CD14-positive monocyte (primary cell): ENCODE measurements at regions of chr17 and their contacts with region 1.

Region 1: GRCh38 chr17:6995431-6996255 is at the start of gene ALOX12:
- DNase-seq: no peak
- H3K4me3 ChIP-seq: peak within 1 kb of the TSS in 1 of 3 experiments; percentile 32
- H3K4me3 Mint-ChIP-seq: peak within 1 kb of the TSS; percentile 34 to 55
- H3K27ac ChIP-seq: no peak within 1 kb of the TSS
- H3K27ac Mint-ChIP-seq: peak within 1 kb of the TSS in 1 of 7 donors; percentile 63
- H3K4me1 ChIP-seq: peaks cover 0 to 15% of the 10 kb centered on the region in 2 donors
- H3K4me1 Mint-ChIP-seq: peaks cover 17% of the 10 kb centered on the region
- H3K27me3 ChIP-seq: no peaks in the 10 kb centered on the region
- H3K27me3 Mint-ChIP-seq: peaks cover 4 to 11% (median 5%) of the 10 kb centered on the region in 3 donors
- CTCF ChIP-seq: no peak
- polyA plus RNA-seq, gene ALOX12: 0.29 to 1.2 TPM in 2 of 3 donors, not detected in the other

Region 2: GRCh38 chr17:6666077-6666521 is 329.5 kb before region 1 on chr17:
- intact Hi-C with region 1: loop called in 1 of 2 experiments (anchors 10 kb)
- DNase-seq: peak; percentile 52 to 68 (median 58)
- H3K4me3 ChIP-seq: no peak overlapping the region
- H3K4me3 Mint-ChIP-seq: peak overlapping the region in 1 of 2 donors; percentile 11
- H3K27ac ChIP-seq: no peak overlapping the region
- H3K27ac Mint-ChIP-seq: peak overlapping the region in 1 of 7 donors; percentile 14
- H3K4me1 ChIP-seq: peaks cover 6 to 7% of the 10 kb centered on the region in 2 donors
- H3K4me1 Mint-ChIP-seq: peaks cover 16% of the 10 kb centered on the region
- H3K27me3 ChIP-seq: peaks cover 0 to 20% of the 10 kb centered on the region in 2 donors
- H3K27me3 Mint-ChIP-seq: peaks cover 27 to 46% (median 34%) of the 10 kb centered on the region in 3 donors
- CTCF ChIP-seq: peak; percentile 83

Region 3: GRCh38 chr17:6959700-6960099 is 35.9 kb before region 1 on chr17:
- intact Hi-C with region 1: no loop called
- DNase-seq: no peak
- H3K4me3 ChIP-seq: no peak overlapping the region
- H3K4me3 Mint-ChIP-seq: no peak overlapping the region
- H3K27ac ChIP-seq: no peak overlapping the region
- H3K27ac Mint-ChIP-seq: no peak overlapping the region
- H3K4me1 ChIP-seq: no peaks in the 10 kb centered on the region
- H3K4me1 Mint-ChIP-seq: no peaks in the 10 kb centered on the region
- H3K27me3 ChIP-seq: no peaks in the 10 kb centered on the region
- H3K27me3 Mint-ChIP-seq: no peaks in the 10 kb centered on the region
- CTCF ChIP-seq: no peak

Region 4: DNA sequence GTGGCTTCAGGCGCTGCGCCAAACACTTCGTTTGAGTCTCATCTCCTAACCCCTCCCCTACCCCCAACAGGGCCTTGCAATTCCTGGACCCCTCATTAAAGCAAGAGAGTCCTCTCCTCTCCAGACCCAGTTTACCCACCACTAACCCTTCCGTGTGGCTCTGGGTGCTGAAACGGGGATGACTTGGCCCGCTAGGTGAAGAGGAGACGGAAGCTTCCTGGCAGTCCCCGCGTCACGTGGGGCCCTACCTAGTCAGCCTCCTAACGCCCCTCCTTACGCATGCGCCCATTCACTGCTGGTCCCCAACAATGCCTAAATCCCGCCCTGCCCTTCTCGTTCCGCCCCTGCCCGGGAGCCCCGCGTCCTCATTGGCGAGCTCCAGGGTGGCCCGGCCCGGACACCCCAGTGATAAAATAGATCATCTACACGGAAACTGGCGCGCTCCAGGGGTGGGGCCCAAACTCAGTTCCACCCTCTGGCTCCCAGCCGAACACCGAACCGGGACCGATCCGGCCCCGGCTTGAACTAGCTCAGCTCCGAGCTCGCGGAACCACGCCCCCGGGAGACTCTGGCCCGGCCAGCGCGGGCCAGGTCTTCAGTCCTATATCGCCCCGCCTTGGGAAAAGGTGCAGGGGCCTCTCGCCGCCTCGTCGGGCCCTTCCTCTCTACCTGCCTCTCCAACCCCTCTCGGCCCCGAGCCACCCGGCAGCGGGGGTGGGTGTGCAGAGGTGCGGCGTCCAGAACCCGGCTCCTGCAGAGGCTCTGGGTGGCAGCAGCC is 40.1 kb after region 1 on chr17 and contains the start of gene SLC16A13:
- intact Hi-C with region 1: no loop called
- DNase-seq: peak; percentile 96 to 98 (median 98)
- H3K4me3 ChIP-seq: peak within 1 kb of the TSS; percentile 73 to 86 (median 80)
- H3K4me3 Mint-ChIP-seq: peak within 1 kb of the TSS; percentile 93 to 98
- H3K27ac ChIP-seq: peak within 1 kb of the TSS; percentile 87 to 91
- H3K27ac Mint-ChIP-seq: peak within 1 kb of the TSS; percentile 89 to 95 (median 94)
- H3K4me1 ChIP-seq: peaks cover 20% of the 10 kb centered on the region in 2 donors
- H3K4me1 Mint-ChIP-seq: peaks cover 30% of the 10 kb centered on the region
- H3K27me3 ChIP-seq: no peaks in the 10 kb centered on the region
- H3K27me3 Mint-ChIP-seq: peaks cover 2 to 8% (median 4%) of the 10 kb centered on the region in 3 donors
- CTCF ChIP-seq: no peak
- polyA plus RNA-seq, gene SLC16A13: 0.93 to 3.1 (median 2.2) TPM